Activated naive CD4-positive, alpha-beta T cell treated with anti-CD3 and anti-CD28 coated beads, Interleukin-2, amount 10 ng/mL, durations not matched to agents 7 days and 5 days (primary cell): ENCODE measurements at regions of chr3 and their contacts with region 1.

Region 1: DNA sequence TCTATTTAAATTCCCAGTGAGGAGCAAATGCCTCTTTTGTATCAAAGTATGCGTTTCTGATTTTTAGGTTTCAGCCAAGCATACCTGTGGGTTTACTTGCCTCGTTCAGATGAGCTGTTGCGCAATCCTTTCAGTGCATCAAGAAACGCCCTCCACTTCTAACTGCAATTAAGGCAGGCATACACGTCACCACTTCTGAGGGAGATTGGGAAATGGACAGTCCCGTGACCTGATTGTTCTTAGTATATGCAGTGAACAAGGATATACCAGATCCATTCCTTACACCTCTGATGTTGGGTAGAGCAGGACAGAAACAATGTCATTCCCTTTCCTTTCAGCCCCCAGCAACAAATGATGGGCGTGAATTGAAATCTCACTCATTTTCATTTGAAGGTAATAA is 219.0 kb downstream of the ITPR1 start:
- DNase-seq: no peak
- H3K4me3 Mint-ChIP-seq: no peak overlapping the region
- H3K27ac Mint-ChIP-seq: no peak overlapping the region
- H3K4me1 Mint-ChIP-seq: peaks cover 17% of the 10 kb centered on the region
- H3K27me3 Mint-ChIP-seq: no peaks in the 10 kb centered on the region

Region 2: GRCh38 chr3:4656059-4656458 is 56.1 kb before region 1 on chr3:
- CTCF ChIA-PET with region 1: interaction called, 10 read pairs
- DNase-seq: peak; percentile 28
- H3K4me3 Mint-ChIP-seq: no peak overlapping the region
- H3K27ac Mint-ChIP-seq: no peak overlapping the region
- H3K4me1 Mint-ChIP-seq: no peaks in the 10 kb centered on the region
- H3K27me3 Mint-ChIP-seq: no peaks in the 10 kb centered on the region

Region 3: GRCh38 chr3:4666078-4666477 is 46.1 kb before region 1 on chr3:
- CTCF ChIA-PET with region 1: no interaction called
- DNase-seq: no peak
- H3K4me3 Mint-ChIP-seq: no peak overlapping the region
- H3K27ac Mint-ChIP-seq: no peak overlapping the region
- H3K4me1 Mint-ChIP-seq: no peaks in the 10 kb centered on the region
- H3K27me3 Mint-ChIP-seq: no peaks in the 10 kb centered on the region

Region 4: GRCh38 chr3:4986782-4987537 is 274.8 kb after region 1 on chr3:
- CTCF ChIA-PET with region 1: interaction called, 20 read pairs
- DNase-seq: peak; percentile 87
- H3K4me3 Mint-ChIP-seq: peak overlapping the region; percentile 82
- H3K27ac Mint-ChIP-seq: peak overlapping the region; percentile 93
- H3K4me1 Mint-ChIP-seq: peaks cover 71% of the 10 kb centered on the region
- H3K27me3 Mint-ChIP-seq: peaks cover 12% of the 10 kb centered on the region

Region 5: GRCh38 chr3:5035692-5036391 is 323.7 kb after region 1 on chr3:
- CTCF ChIA-PET with region 1: interaction called, 15 read pairs
- DNase-seq: no peak
- H3K4me3 Mint-ChIP-seq: no peak overlapping the region
- H3K27ac Mint-ChIP-seq: no peak overlapping the region
- H3K4me1 Mint-ChIP-seq: peaks cover 17% of the 10 kb centered on the region
- H3K27me3 Mint-ChIP-seq: peaks cover 12% of the 10 kb centered on the region

Region 6: DNA sequence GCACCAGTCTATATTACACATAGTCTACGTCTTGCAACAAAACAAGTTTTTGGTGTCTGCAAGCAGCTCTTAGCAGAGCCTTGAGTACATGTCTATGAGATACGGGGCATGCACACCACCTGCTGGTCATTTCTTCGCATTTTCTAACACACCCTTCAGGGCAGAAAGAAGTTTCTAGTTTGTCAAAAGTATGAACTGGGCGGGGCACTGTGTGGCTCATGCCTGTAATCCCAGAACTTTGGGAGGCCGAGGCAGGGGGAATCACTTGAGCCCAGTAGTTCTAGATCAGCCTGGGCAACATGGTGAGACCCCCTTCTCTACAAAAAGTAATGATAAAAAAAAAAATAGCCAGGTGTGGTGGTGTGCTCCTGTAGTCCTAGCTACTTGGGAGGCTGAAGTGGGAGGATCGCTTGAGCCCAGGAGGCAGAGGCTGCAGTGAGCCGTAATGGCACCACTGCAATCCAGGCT is 345.7 kb after region 1 on chr3:
- CTCF ChIA-PET with region 1: interaction called, 200 read pairs
- DNase-seq: peak; percentile 88
- H3K4me3 Mint-ChIP-seq: no peak overlapping the region
- H3K27ac Mint-ChIP-seq: no peak overlapping the region
- H3K4me1 Mint-ChIP-seq: peaks cover 26% of the 10 kb centered on the region
- H3K27me3 Mint-ChIP-seq: peaks cover 25% of the 10 kb centered on the region